Endothelial cell of umbilical vein (primary cell): ENCODE measurements at regions of chr11 and their contacts with region 1.

Region 1: GRCh38 chr11:7977232-7977917 is 9.8 kb upstream of the EIF3F start:
- DNase-seq: peak; percentile 84
- H3K4me3 ChIP-seq: peak overlapping the region in 2 of 3 experiments; percentile 18 to 53
- H3K27ac ChIP-seq: peak overlapping the region; percentile 80
- H3K4me1 ChIP-seq: peaks cover 30% of the 10 kb centered on the region
- H3K27me3 ChIP-seq: no peaks in the 10 kb centered on the region
- CTCF ChIP-seq: no peak
- POLR2A ChIP-seq: no peak

Region 2: GRCh38 chr11:7056828-7057513 is 920.4 kb before region 1 on chr11:
- CTCF ChIA-PET with region 1: no interaction called
- POLR2A ChIA-PET with region 1: no interaction called
- dilution Hi-C with region 1: no loop called
- intact Hi-C with region 1: loop called (anchors 5 kb)
- DNase-seq: peak; percentile 64
- H3K4me3 ChIP-seq: no peak overlapping the region
- H3K27ac ChIP-seq: peak overlapping the region; percentile 81
- H3K4me1 ChIP-seq: peaks cover 31% of the 10 kb centered on the region
- H3K27me3 ChIP-seq: no peaks in the 10 kb centered on the region
- CTCF ChIP-seq: no peak
- POLR2A ChIP-seq: no peak

Region 3: DNA sequence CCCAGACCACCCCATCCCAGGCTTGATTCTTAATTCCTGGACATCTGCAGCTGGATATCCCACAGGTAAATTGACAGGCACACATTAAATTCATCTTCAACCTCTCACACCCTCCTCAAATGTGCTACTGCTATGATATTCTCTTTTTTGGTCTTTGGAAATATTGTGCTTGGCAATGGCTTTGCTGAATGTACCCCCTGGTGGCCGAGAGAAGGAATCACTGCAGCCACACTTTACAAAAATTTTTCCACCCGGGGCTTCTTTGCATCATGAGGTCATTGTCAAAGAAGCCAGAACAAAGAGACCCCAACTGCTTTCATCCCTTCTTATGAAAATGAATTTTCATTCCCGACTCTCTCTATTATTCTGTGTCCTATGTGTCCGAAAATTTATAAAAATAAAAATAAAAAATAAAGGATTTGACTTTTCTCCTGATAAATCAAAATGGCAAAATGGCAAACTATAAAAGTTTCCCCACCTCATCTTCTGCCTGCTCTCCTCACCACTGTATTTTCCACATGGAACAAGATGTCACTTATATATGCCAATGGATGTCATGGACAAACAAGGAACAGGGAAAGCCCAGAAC is 289.0 kb before region 1 on chr11:
- CTCF ChIA-PET with region 1: no interaction called
- POLR2A ChIA-PET with region 1: no interaction called
- dilution Hi-C with region 1: no loop called
- intact Hi-C with region 1: loop called (anchors 1 kb)
- DNase-seq: peak; percentile 36
- H3K4me3 ChIP-seq: no peak overlapping the region
- H3K27ac ChIP-seq: no peak overlapping the region
- H3K4me1 ChIP-seq: no peaks in the 10 kb centered on the region
- H3K27me3 ChIP-seq: peaks cover 46 to 50% of the 10 kb centered on the region in 2 experiments
- CTCF ChIP-seq: peak; percentile 72 to 77
- POLR2A ChIP-seq: no peak

Region 4: GRCh38 chr11:7892840-7893254 is 84.5 kb before region 1 on chr11:
- CTCF ChIA-PET with region 1: interaction called, 12 read pairs
- POLR2A ChIA-PET with region 1: no interaction called
- dilution Hi-C with region 1: no loop called
- intact Hi-C with region 1: loop called (anchors 2 kb)
- DNase-seq: peak; percentile 68
- H3K4me3 ChIP-seq: no peak overlapping the region
- H3K27ac ChIP-seq: no peak overlapping the region
- H3K4me1 ChIP-seq: peaks cover 4% of the 10 kb centered on the region
- H3K27me3 ChIP-seq: peaks cover 12 to 17% of the 10 kb centered on the region in 2 experiments
- CTCF ChIP-seq: peak; percentile 61 to 66
- POLR2A ChIP-seq: no peak

Region 5: DNA sequence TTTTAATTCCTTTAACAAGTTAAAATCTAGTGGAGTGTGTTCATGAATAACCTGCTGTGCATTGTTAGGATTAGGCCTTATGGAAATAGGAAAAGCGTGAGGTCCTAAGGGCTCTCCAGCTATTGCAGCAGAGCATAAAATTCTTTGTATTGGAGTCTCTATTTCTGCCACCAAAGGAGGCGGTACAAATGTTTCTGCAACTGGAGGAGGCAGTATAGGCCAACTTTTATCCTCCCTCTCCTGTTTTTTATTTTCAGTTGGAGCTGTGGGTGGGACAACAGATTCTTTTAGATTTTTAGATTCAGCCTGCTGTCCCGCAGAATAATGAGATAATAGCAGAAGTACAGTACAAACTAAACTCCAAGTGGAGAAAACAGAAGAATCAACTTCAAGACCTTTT is 72.5 kb before region 1 on chr11:
- CTCF ChIA-PET with region 1: interaction called, 109 read pairs
- POLR2A ChIA-PET with region 1: no interaction called
- dilution Hi-C with region 1: no loop called
- intact Hi-C with region 1: loop called (anchors 2 kb)
- DNase-seq: peak; percentile 38
- H3K4me3 ChIP-seq: no peak overlapping the region
- H3K27ac ChIP-seq: no peak overlapping the region
- H3K4me1 ChIP-seq: no peaks in the 10 kb centered on the region
- H3K27me3 ChIP-seq: peaks cover 2 to 8% of the 10 kb centered on the region in 2 experiments
- CTCF ChIP-seq: peak in 1 of 2 donors; percentile 11
- POLR2A ChIP-seq: no peak

Region 6: GRCh38 chr11:8180469-8180868 is 203.1 kb after region 1 on chr11:
- CTCF ChIA-PET with region 1: no interaction called
- POLR2A ChIA-PET with region 1: no interaction called
- dilution Hi-C with region 1: no loop called
- intact Hi-C with region 1: no loop called
- DNase-seq: no peak
- H3K4me3 ChIP-seq: no peak overlapping the region
- H3K27ac ChIP-seq: no peak overlapping the region
- H3K4me1 ChIP-seq: no peaks in the 10 kb centered on the region
- H3K27me3 ChIP-seq: peaks cover 0 to 4% of the 10 kb centered on the region in 2 experiments
- CTCF ChIP-seq: no peak
- POLR2A ChIP-seq: no peak